PC-3 (cell line): ENCODE measurements at regions of chr6 and their contacts with region 1.

Region 1: GRCh38 chr6:57048577-57048976 is 2.1 kb downstream of the KIAA1586 start:
- DNase-seq: peak; percentile 12
- ATAC-seq: no peak
- H3K4me3 ChIP-seq: peak overlapping the region; percentile 52
- H3K27ac ChIP-seq: no peak overlapping the region
- H3K4me1 ChIP-seq: peaks cover 20% of the 10 kb centered on the region
- H3K27me3 ChIP-seq: no peaks in the 10 kb centered on the region
- CTCF ChIP-seq: no peak

Region 2: DNA sequence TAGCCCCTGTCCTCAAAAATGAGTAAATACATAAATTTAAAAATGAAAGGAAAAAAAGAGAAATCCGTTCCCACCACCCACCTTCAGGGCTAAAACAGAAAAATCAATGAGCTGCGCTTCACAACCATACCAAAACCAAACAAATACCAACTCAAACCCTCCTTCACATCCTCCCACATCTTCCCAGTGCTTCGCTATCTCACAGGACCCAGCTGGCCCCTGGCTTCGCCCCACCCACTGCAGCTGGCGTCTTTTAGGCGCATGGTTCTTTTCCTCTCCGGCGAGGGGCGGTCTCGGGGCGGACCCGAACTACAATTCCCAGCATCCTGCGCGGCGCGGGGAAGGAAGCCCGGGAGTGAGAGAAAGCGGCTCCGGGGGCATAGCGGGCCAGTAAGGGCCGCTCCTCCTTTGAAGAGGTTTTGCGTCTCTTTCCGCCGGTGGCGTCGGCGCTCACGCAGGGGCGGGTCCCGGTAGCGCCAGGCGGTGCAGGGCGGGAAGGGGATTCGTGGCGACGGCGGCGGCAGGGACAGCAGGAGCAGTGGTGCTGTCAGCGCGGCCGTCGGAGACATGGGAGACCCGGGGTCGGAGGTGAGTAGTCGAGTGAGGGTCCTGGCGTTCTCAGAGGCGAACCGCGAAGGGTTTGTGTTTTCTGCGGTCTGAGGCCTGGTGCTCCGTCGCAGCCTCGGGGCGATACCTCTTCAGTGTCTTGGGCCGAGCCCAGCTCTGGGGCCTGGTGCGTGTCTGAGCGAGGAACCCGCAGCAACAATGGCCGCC is 41.3 kb after region 1 on chr6 and contains the start of gene ZNF451:
- CTCF ChIA-PET with region 1: no interaction called
- POLR2A ChIA-PET with region 1: no interaction called
- intact Hi-C with region 1: loop called (anchors 5 kb)
- DNase-seq: peak; percentile 97
- ATAC-seq: peak; percentile 93
- H3K4me3 ChIP-seq: peak within 1 kb of the TSS; percentile 72
- H3K27ac ChIP-seq: no peak within 1 kb of the TSS
- H3K4me1 ChIP-seq: peaks cover 29% of the 10 kb centered on the region
- H3K27me3 ChIP-seq: no peaks in the 10 kb centered on the region
- CTCF ChIP-seq: no peak
- total RNA-seq, gene ZNF451: 32.5 and 34.5 TPM in 2 replicates